ENCODE measurements at regions of chr1 and their contacts with region 1.

Region 1: GRCh38 chr1:35715568-35716002 is 3.1 kb downstream of the C1orf216 start:
- DNase-seq: peak; percentile 65
- H3K4me3 ChIP-seq: no peak overlapping the region
- H3K27ac ChIP-seq: no peak overlapping the region
- H3K4me1 ChIP-seq: peaks cover 13% of the 10 kb centered on the region
- H3K27me3 ChIP-seq: no peaks in the 10 kb centered on the region
- CTCF ChIP-seq: peak; percentile 85 to 89
- POLR2A ChIP-seq: no peak

Region 2: GRCh38 chr1:34984793-34985608 is 730.6 kb before region 1 on chr1 and contains the start of gene TMEM35B:
- CTCF ChIA-PET with region 1: no interaction called
- POLR2A ChIA-PET with region 1: no interaction called
- dilution Hi-C with region 1: no loop called
- intact Hi-C with region 1: no loop called
- DNase-seq: peak; percentile 70
- H3K4me3 ChIP-seq: peak within 1 kb of the TSS; percentile 81 to 90 (median 89)
- H3K27ac ChIP-seq: peak within 1 kb of the TSS; percentile 82
- H3K4me1 ChIP-seq: peaks cover 15% of the 10 kb centered on the region
- H3K27me3 ChIP-seq: no peaks in the 10 kb centered on the region
- CTCF ChIP-seq: peak in 1 of 2 donors; percentile 8
- POLR2A ChIP-seq: peak; percentile 82
- total RNA-seq, gene TMEM35B: 18.7 and 19.1 TPM in 2 replicates

Region 3: GRCh38 chr1:35577071-35577998 is 138.2 kb before region 1 on chr1:
- CTCF ChIA-PET with region 1: interaction called, 34 read pairs
- POLR2A ChIA-PET with region 1: no interaction called
- dilution Hi-C with region 1: no loop called
- intact Hi-C with region 1: no loop called
- DNase-seq: peak; percentile 37
- H3K4me3 ChIP-seq: peak overlapping the region in 1 of 3 experiments; percentile 9
- H3K27ac ChIP-seq: no peak overlapping the region
- H3K4me1 ChIP-seq: peaks cover 9% of the 10 kb centered on the region
- H3K27me3 ChIP-seq: peaks cover 30 to 52% of the 10 kb centered on the region in 2 experiments
- CTCF ChIP-seq: no peak
- POLR2A ChIP-seq: no peak

Region 4: DNA sequence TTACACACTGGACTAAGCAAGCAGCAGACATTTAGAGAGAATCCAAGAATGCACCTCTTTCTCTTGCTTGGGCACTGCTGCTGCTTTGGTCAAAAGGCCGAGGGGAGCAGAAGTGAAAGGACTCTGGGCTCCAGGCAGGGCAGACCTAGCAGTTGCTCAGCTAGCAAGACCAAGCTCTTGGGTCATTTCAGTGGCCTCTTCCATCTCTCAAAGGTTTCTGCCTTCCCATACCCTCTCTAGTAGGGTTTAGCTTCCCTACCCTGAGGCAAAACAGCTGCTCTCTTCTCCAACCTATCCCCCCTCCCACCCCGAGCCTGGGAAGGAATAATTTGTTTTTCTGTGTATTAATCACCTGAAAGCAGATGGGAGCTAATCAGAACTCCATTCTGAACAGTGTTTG is 116.7 kb before region 1 on chr1:
- CTCF ChIA-PET with region 1: interaction called, 13 read pairs
- POLR2A ChIA-PET with region 1: no interaction called
- dilution Hi-C with region 1: no loop called
- intact Hi-C with region 1: no loop called
- DNase-seq: no peak
- H3K4me3 ChIP-seq: no peak overlapping the region
- H3K27ac ChIP-seq: no peak overlapping the region
- H3K4me1 ChIP-seq: no peaks in the 10 kb centered on the region
- H3K27me3 ChIP-seq: no peaks in the 10 kb centered on the region
- CTCF ChIP-seq: no peak
- POLR2A ChIP-seq: no peak

Region 5: DNA sequence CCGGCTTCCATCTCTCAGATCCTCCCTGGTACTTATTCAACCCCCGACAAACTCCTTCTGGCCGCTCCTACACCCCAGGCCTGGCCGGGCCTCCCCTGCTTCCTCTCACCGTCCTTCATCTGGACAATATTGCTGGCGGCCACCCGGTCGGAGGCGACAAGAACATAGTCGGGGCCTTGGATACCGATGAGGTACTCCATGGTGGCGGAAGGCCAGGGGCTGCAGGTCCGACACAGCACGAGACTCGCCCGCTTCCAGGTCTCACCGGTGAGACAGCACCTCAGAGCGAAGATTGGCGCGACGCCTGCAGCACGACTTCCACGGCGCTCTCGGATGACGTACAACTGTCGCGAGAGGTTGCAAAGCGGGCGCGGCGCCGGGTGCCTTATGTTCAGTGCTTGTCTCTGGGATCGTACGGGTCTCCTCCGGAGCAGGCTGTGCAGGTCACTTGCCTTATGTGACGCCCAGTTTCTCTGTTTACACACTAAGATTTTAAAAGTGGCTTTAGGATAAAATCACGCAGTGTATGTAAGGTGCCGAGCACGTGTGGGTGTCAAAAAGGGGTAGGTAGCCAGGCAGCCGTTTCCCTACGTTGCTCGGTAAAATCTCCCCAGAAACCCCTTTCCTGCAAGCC is 74.2 kb before region 1 on chr1 and contains the start of gene PSMB2:
- CTCF ChIA-PET with region 1: interaction called, 13 read pairs
- POLR2A ChIA-PET with region 1: no interaction called
- dilution Hi-C with region 1: no loop called
- intact Hi-C with region 1: loop called (anchors 2 kb)
- DNase-seq: peak; percentile 96
- H3K4me3 ChIP-seq: peak within 1 kb of the TSS; percentile 64 to 100 (median 80)
- H3K27ac ChIP-seq: peak within 1 kb of the TSS; percentile 81
- H3K4me1 ChIP-seq: peaks cover 24% of the 10 kb centered on the region
- H3K27me3 ChIP-seq: peaks cover 13 to 20% of the 10 kb centered on the region in 2 experiments
- CTCF ChIP-seq: no peak
- POLR2A ChIP-seq: peak; percentile 94
- total RNA-seq, gene PSMB2: 93.6 and 101 TPM in 2 replicates